Ovary (tissue), 10 donors: ENCODE measurements at regions of chr2 and their contacts with region 1.

Region 1: DNA sequence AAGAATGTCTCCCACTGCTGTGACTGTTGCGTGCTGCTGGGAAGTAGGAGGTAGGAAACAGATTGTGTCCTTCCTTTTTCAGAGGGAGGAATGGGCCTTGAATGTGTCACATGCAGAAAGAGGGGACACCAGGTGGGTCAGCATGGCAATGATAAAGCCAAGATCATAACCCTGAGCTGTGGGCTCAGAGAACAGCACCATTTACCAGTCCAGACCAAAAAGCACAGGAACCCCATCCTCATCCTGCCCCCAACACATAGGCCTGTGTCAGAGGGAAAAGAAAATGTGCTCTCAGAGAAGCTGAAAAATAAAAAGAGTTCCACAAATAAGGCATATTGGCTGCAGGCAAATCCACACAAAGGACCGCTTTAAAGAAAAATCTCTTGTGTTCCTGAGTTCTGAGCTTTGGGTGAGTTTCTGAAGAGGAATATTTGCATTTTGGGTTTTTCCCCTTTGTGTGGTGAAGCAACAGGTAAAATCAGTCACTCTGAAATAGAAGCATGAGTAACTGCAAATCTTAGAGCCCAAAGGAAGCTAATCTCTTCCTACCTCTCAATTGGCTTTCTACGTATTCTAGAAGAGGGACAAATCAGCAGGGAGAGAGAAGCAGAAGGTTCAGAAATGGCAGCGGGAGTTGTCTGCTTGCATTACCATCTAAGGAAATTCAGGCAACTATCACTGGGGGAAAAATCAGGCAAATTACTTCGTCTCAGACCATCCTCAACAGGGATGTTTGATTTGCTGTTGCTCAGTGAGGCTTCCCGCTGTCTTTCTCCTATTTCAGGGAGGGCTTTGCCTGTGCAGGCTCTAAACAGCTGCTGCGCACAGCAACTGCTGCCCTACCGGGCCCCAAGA is 106.8 kb downstream of the BCL11A start:
- DNase-seq: no peak
- H3K4me3 ChIP-seq: no peak overlapping the region
- H3K27ac ChIP-seq: no peak overlapping the region
- H3K4me1 ChIP-seq: no peaks in the 10 kb centered on the region
- H3K27me3 ChIP-seq: no peaks in the 10 kb centered on the region
- CTCF ChIP-seq: no peak
- EP300 ChIP-seq: no peak
- POLR2A ChIP-seq: no peak

Region 2: GRCh38 chr2:60468382-60469085 is 21.9 kb after region 1 on chr2:
- intact Hi-C with region 1: loop called in 1 of 4 experiments (anchors 1 kb)
- DNase-seq: no peak
- H3K4me3 ChIP-seq: no peak overlapping the region
- H3K27ac ChIP-seq: no peak overlapping the region
- H3K4me1 ChIP-seq: no peaks in the 10 kb centered on the region
- H3K27me3 ChIP-seq: no peaks in the 10 kb centered on the region
- CTCF ChIP-seq: no peak
- EP300 ChIP-seq: no peak
- POLR2A ChIP-seq: no peak